ENCODE measurements at regions of chr16 and their contacts with region 1.

Region 1: GRCh38 chr16:67428146-67428731 is 2.7 kb upstream of the HSD11B2 start:
- DNase-seq: peak; percentile 28
- ATAC-seq: peak; percentile 70
- H3K4me3 ChIP-seq: no peak overlapping the region
- H3K27ac ChIP-seq: no peak overlapping the region
- H3K4me1 ChIP-seq: peaks cover 2% of the 10 kb centered on the region; the same call in 1 of the 2 replicates
- H3K27me3 ChIP-seq: no peaks in the 10 kb centered on the region; the same call in 1 of the 2 replicates
- CTCF ChIP-seq: peak; percentile 90

Region 2: GRCh38 chr16:67326472-67327309 is 101.5 kb before region 1 on chr16 and contains the starts of genes KCTD19 and LRRC36:
- CTCF ChIA-PET with region 1: no interaction called
- POLR2A ChIA-PET with region 1: no interaction called
- in situ Hi-C with region 1: no loop called
- intact Hi-C with region 1: no loop called
- DNase-seq: no peak
- ATAC-seq: peak; percentile 97
- H3K4me3 ChIP-seq: peak within 1 kb of the TSS; percentile 48 to 73
- H3K27ac ChIP-seq: no peak within 1 kb of the TSS
- H3K4me1 ChIP-seq: no peaks in the 10 kb centered on the region
- H3K27me3 ChIP-seq: no peaks in the 10 kb centered on the region
- CTCF ChIP-seq: peak; percentile 83
- total RNA-seq, gene KCTD19: 0.62 TPM
- total RNA-seq, gene LRRC36: 0.54 TPM

Region 3: DNA sequence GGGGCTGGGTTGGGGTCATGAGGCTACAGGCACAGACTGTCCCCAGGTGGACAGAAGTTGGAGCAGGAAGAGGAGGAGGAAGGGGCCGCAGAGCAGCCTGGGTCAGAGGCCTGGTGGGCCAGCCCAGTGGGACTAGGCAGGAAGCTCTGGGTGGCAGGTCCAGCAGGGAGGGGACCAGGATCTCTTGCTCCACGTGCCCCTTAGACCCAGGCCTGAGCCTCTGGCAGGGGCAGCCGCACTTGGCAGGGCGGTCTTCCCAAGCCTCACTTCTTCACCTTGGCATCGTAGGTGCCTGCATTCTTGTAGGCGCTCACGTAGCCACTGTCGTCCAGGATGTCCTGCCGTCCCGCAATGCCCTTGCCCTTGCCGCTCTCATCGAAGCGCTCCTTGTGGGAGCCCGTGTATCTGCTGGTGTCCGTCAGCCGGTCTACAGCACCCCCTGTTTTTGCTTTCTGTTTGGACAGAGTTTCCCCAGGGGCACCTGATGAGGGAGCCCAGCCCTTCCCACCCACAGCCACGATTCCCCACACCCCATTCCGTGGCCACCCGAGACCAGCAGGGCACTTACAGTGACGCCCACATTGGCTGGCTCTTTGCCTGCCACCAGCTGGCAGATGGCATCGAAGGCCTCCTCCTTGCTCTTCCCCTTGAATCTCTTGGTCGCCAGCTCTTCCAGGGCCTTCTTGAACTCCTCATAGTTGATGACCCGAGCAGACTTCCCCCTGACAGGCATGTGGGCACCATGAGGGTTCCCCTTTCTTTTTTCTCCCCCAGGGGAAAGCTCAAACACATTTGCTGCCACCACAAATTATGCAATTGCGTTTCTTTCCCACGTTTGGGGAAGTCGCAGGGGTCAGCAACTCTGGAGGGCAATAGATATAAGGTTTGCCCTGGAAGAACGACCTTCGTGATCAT is 38.1 kb before region 1 on chr16:
- CTCF ChIA-PET with region 1: no interaction called
- POLR2A ChIA-PET with region 1: no interaction called
- in situ Hi-C with region 1: no loop called
- intact Hi-C with region 1: no loop called
- DNase-seq: no peak
- ATAC-seq: no peak
- H3K4me3 ChIP-seq: no peak overlapping the region
- H3K27ac ChIP-seq: no peak overlapping the region
- H3K4me1 ChIP-seq: no peaks in the 10 kb centered on the region; the same call in 1 of the 2 replicates
- H3K27me3 ChIP-seq: no peaks in the 10 kb centered on the region
- CTCF ChIP-seq: no peak

Region 4: GRCh38 chr16:67464565-67464964 is 36.3 kb after region 1 on chr16:
- CTCF ChIA-PET with region 1: interaction called, 6 read pairs
- POLR2A ChIA-PET with region 1: no interaction called
- in situ Hi-C with region 1: no loop called
- intact Hi-C with region 1: loop called (anchors 2 kb)
- DNase-seq: no peak
- ATAC-seq: no peak
- H3K4me3 ChIP-seq: no peak overlapping the region
- H3K27ac ChIP-seq: no peak overlapping the region
- H3K4me1 ChIP-seq: no peaks in the 10 kb centered on the region
- H3K27me3 ChIP-seq: no peaks in the 10 kb centered on the region
- CTCF ChIP-seq: no peak

Measured in Panc1 (cell line).